A549 (cell line): ENCODE measurements at regions of chr7 and their contacts with region 1.

Region 1: DNA sequence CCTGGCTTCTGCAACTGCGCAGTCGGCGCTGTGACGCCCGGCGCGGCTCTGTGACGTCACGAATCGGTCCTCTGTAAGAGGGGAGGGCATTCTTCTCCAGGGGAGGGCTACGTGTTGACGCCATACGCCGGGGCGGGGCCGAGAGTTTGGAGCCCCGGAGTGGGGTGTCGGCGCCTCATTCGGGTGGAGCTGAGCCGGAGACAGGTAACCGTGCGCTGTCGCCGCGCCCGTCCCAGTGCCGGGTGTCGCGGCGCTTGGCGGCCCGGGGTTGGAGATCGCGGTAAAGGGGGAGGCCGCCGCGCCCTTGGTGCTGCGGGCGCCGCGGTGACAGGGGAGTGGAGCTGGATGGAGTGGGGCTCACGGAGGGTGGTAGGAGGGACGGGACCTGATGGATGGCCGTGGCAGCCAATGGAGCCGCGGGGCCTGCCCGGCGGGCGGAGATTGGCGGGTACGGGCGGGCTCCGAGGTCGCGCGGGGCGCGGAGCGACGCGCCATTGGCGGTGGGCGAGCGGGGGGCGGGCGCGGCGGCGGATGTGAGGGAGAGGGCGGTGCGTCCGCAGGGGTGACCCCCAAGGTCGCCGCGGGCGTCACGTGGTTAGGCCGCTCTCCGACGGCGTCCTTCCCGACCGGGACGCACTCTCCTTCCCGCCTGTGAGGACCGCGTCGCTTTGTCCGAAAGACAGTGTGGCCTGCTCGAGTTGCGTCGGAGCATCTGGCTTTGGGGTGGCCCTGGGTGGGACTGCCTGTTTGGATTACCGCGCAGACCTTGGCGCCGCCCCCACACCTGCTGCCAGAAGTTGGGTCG is at the start of gene OGDH:
- DNase-seq: peak; percentile 98
- ATAC-seq: peak; percentile 99
- H3K4me3 ChIP-seq: peak within 1 kb of the TSS; percentile 86
- H3K27ac ChIP-seq: peak within 1 kb of the TSS; percentile 88 to 94
- H3K4me1 ChIP-seq: peaks cover 26% of the 10 kb centered on the region
- CTCF ChIP-seq: no peak
- EP300 ChIP-seq: no peak
- POLR2A ChIP-seq: peak; percentile 78
- RAD21 ChIP-seq: no peak
- polyA plus RNA-seq, gene OGDH: 32.5 and 37.2 TPM in 2 replicates

Region 2: GRCh38 chr7:44348300-44348699 is 258.4 kb before region 1 on chr7:
- CTCF ChIA-PET with region 1: no interaction called
- POLR2A ChIA-PET with region 1: no interaction called
- DNase-seq: peak; percentile 28 to 47
- ATAC-seq: peak; percentile 56 to 88; a peak in 5 of 6 replicates
- H3K4me3 ChIP-seq: no peak overlapping the region
- H3K27ac ChIP-seq: no peak overlapping the region
- H3K4me1 ChIP-seq: no peaks in the 10 kb centered on the region
- CTCF ChIP-seq: peak; percentile 16; the same call in 1 of the 3 replicates
- EP300 ChIP-seq: no peak
- POLR2A ChIP-seq: no peak
- RAD21 ChIP-seq: peak; percentile 37 to 61; a peak in 4 of 5 replicates

Region 3: GRCh38 chr7:44581879-44582603 is 24.6 kb before region 1 on chr7 and contains the start of gene TMED4:
- CTCF ChIA-PET with region 1: interaction called, 3 read pairs
- POLR2A ChIA-PET with region 1: interaction called, 10 read pairs
- DNase-seq: peak; percentile 98 to 99
- ATAC-seq: peak; percentile 94
- H3K4me3 ChIP-seq: peak within 1 kb of the TSS; percentile 94
- H3K27ac ChIP-seq: peak within 1 kb of the TSS; percentile 94 to 95
- H3K4me1 ChIP-seq: peaks cover 16% of the 10 kb centered on the region
- CTCF ChIP-seq: no peak
- EP300 ChIP-seq: no peak
- POLR2A ChIP-seq: peak; percentile 93
- RAD21 ChIP-seq: no peak
- polyA plus RNA-seq, gene TMED4: 68.3 and 79.2 TPM in 2 replicates

Region 4: GRCh38 chr7:44638611-44639557 is 32.2 kb after region 1 on chr7:
- CTCF ChIA-PET with region 1: interaction called, 3 read pairs
- POLR2A ChIA-PET with region 1: interaction called, 17 read pairs
- DNase-seq: peak; percentile 81 to 83
- ATAC-seq: peak; percentile 84 to 88
- H3K4me3 ChIP-seq: no peak overlapping the region
- H3K27ac ChIP-seq: peak overlapping the region; percentile 75 to 89
- H3K4me1 ChIP-seq: peaks cover 45% of the 10 kb centered on the region
- CTCF ChIP-seq: no peak
- EP300 ChIP-seq: no peak; a peak in 1 of 5 replicates
- POLR2A ChIP-seq: no peak
- RAD21 ChIP-seq: no peak